ENCODE measurements at regions of chr22 and their contacts with region 1.

Region 1: DNA sequence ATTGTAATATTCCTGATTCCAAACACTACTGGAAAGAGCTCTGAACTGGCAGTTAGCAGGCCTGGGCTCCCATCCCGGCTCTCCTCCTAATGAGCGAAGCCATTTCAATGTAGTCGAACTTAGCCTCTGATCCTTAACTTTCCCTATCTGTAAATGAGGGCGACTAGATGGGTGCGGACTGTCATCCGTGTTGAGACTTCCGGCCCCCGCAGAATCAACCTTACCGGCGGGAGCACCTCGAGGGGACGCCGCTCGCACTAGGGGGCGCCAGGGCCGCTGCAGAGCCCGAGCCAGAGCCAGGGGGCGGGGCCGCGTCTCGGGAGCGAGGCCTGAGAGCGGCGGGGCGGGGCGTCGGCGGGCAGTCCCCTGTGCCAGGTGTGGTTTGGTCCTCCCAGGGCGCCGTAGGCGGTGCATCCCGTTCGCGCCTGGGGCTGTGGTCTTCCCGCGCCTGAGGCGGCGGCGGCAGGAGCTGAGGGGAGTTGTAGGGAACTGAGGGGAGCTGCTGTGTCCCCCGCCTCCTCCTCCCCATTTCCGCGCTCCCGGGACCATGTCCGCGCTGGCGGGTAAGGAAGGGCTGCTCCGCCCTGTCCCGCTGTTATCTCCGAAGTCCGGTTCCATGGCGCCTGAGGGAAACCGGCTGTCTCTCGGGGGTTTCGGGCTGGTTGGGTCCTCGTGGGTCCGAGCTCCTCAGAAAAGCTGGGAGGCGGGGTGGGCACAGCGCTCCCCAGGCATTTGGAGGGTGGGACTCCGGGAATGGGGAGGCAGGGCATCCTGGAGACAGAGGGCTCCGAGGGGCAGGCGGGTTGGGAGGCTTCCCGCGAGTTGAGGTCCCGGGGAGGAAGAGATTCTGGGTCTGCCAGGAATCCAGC is at the start of gene LIMK2:
- DNase-seq: peak; percentile 60
- ATAC-seq: peak; percentile 97
- H3K4me3 ChIP-seq: peak within 1 kb of the TSS; percentile 84
- H3K27ac ChIP-seq: peak within 1 kb of the TSS; percentile 87
- H3K4me1 ChIP-seq: peaks cover 4% of the 10 kb centered on the region
- H3K27me3 ChIP-seq: no peaks in the 10 kb centered on the region
- CTCF ChIP-seq: peak; percentile 72 to 95 (median 86)
- EP300 ChIP-seq: no peak
- POLR2A ChIP-seq: peak; percentile 91
- RAD21 ChIP-seq: peak; percentile 77
- polyA plus RNA-seq, gene LIMK2: 2.9 to 5.0 TPM

Region 2: GRCh38 chr22:31107178-31107893 is 104.8 kb before region 1 on chr22 and contains the start of gene SELENOM:
- CTCF ChIA-PET with region 1: interaction called, 16 read pairs
- POLR2A ChIA-PET with region 1: no interaction called
- RAD21 ChIA-PET with region 1: interaction called, 5 read pairs
- SMC1A ChIA-PET with region 1: interaction called, 3 read pairs
- in situ Hi-C with region 1: no loop called
- intact Hi-C with region 1: no loop called
- DNase-seq: peak; percentile 53
- ATAC-seq: peak; percentile 94
- H3K4me3 ChIP-seq: peak within 1 kb of the TSS; percentile 54
- H3K27ac ChIP-seq: no peak within 1 kb of the TSS
- H3K4me1 ChIP-seq: no peaks in the 10 kb centered on the region; the same call in 1 of the 2 replicates
- H3K27me3 ChIP-seq: no peaks in the 10 kb centered on the region
- CTCF ChIP-seq: peak; percentile 89 to 91 (median 90)
- EP300 ChIP-seq: no peak
- POLR2A ChIP-seq: peak; percentile 72
- RAD21 ChIP-seq: peak; percentile 58
- polyA plus RNA-seq, gene SELENOM: 0.80 to 1.3 TPM

Region 3: DNA sequence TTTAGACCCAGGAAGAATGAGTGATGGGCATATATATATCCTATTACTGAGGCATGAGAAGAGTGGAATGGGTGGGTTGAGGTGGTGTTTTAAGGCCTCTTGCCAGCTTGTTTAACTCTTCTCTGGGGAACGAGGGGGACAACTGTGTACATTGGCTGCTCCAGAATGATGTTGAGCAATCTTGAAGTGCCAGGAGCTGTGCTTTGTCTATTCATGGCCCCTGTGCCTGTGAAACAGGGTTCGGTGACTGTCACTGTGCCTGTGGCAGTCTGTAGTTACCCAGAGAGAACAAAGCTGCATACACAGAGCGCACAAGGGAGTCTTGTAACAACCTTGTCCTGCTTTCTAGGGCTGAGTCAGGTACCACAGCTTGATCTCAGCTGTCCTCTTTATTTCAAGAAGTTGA is 11.7 kb after region 1 on chr22:
- CTCF ChIA-PET with region 1: interaction called, 244 read pairs
- POLR2A ChIA-PET with region 1: interaction called, 15 read pairs
- RAD21 ChIA-PET with region 1: interaction called, 100 read pairs
- SMC1A ChIA-PET with region 1: interaction called, 260 read pairs
- in situ Hi-C with region 1: no loop called
- intact Hi-C with region 1: no loop called
- DNase-seq: no peak
- ATAC-seq: no peak
- H3K4me3 ChIP-seq: no peak overlapping the region
- H3K27ac ChIP-seq: 0 out of 2 replicates have a peak overlapping the region, but pooled peaks have one; percentile 2
- H3K4me1 ChIP-seq: peaks cover 31% of the 10 kb centered on the region
- H3K27me3 ChIP-seq: no peaks in the 10 kb centered on the region
- CTCF ChIP-seq: no peak
- EP300 ChIP-seq: no peak
- POLR2A ChIP-seq: no peak
- RAD21 ChIP-seq: no peak

Region 4: DNA sequence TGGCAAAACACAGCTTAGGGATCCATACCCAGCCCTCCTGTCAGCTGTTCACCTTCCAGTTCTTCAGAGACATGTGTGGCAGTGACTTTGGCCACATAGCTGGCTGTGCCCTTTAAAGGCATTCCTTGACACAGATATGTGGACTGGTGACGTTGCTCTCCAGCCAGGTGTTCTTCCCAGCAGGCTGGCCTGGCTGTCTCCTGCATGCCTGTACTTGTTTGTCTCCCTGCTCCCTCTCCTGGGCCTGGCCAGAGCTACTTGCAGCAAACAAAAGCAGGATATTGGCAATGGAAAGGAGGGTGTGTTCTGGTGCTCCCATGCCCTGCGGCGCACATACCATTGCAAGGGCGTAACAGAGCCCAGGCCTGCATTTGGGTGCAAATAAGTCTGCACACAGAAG is 41.9 kb after region 1 on chr22:
- CTCF ChIA-PET with region 1: interaction called, 29 read pairs
- POLR2A ChIA-PET with region 1: interaction called, 3 read pairs
- RAD21 ChIA-PET with region 1: interaction called, 5 read pairs
- SMC1A ChIA-PET with region 1: interaction called, 8 read pairs
- in situ Hi-C with region 1: no loop called
- intact Hi-C with region 1: no loop called
- DNase-seq: no peak
- ATAC-seq: no peak
- H3K4me3 ChIP-seq: no peak overlapping the region
- H3K27ac ChIP-seq: peak overlapping the region; percentile 38; the same call in 1 of the 2 replicates
- H3K4me1 ChIP-seq: peaks cover 7% of the 10 kb centered on the region
- H3K27me3 ChIP-seq: no peaks in the 10 kb centered on the region
- CTCF ChIP-seq: no peak
- EP300 ChIP-seq: no peak
- POLR2A ChIP-seq: no peak
- RAD21 ChIP-seq: no peak

Region 5: GRCh38 chr22:31290494-31291471 is 78.7 kb after region 1 on chr22:
- CTCF ChIA-PET with region 1: interaction called, 23 read pairs
- POLR2A ChIA-PET with region 1: interaction called, 8 read pairs
- RAD21 ChIA-PET with region 1: interaction called, 21 read pairs
- SMC1A ChIA-PET with region 1: interaction called, 18 read pairs
- in situ Hi-C with region 1: no loop called
- intact Hi-C with region 1: loop called (anchors 1 kb)
- DNase-seq: peak; percentile 48
- ATAC-seq: peak; percentile 96
- H3K4me3 ChIP-seq: peak overlapping the region; percentile 82
- H3K27ac ChIP-seq: peak overlapping the region; percentile 72
- H3K4me1 ChIP-seq: peaks cover 32% of the 10 kb centered on the region
- H3K27me3 ChIP-seq: no peaks in the 10 kb centered on the region
- CTCF ChIP-seq: no peak
- EP300 ChIP-seq: peak in 1 of 2 experiments; percentile 45; a peak in 1 of 4 replicates
- POLR2A ChIP-seq: peak; percentile 87
- RAD21 ChIP-seq: no peak

Region 6: DNA sequence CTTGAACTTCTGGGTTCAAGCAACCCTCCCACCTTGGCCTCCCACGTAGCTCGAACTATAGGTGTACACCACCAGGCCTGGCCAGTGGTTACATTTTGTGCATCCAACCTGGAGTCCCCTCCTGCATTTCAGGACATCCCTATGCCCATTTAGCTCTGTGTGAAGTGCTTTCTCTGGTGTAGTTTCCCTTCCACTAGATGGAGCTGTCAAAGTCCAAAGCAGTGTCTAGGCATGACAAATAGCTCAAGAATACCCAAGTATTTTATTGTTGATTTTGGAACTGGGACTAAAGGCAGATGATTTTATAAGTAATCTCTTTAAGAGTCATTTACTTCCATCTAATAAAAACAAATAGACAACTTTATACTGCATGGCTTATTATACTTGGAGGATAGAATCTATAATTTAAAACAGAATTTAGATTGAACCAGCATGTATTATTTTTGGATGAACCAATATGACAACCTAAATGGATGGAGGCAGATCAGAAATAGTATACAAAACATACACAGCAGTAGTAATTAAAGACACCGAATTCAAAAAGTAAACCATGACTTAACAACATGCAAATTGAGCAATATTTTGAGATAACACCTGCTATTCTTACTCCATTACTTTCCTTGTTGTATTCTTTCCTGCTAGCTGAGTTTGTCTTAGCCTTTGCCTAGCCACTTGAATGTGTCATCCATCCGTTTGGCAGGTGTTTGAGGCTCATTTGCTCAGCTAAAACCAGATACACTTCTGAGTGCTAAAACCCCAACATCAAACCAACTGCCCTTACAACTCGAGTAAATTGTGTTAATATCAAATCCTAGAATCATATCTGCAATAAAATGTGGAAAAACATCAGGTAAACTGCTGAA is 239.8 kb after region 1 on chr22:
- CTCF ChIA-PET with region 1: no interaction called
- POLR2A ChIA-PET with region 1: no interaction called
- RAD21 ChIA-PET with region 1: no interaction called
- SMC1A ChIA-PET with region 1: no interaction called
- in situ Hi-C with region 1: no loop called
- intact Hi-C with region 1: no loop called
- DNase-seq: peak; percentile 15
- ATAC-seq: peak; percentile 92
- H3K4me3 ChIP-seq: no peak overlapping the region
- H3K27ac ChIP-seq: no peak overlapping the region
- H3K4me1 ChIP-seq: peaks cover 6% of the 10 kb centered on the region
- H3K27me3 ChIP-seq: no peaks in the 10 kb centered on the region
- CTCF ChIP-seq: peak; percentile 59 to 63 (median 59)
- EP300 ChIP-seq: no peak
- POLR2A ChIP-seq: no peak
- RAD21 ChIP-seq: peak; percentile 59